HCT116 (cell line): ENCODE measurements at regions of chr19 and their contacts with region 1.

Region 1: DNA sequence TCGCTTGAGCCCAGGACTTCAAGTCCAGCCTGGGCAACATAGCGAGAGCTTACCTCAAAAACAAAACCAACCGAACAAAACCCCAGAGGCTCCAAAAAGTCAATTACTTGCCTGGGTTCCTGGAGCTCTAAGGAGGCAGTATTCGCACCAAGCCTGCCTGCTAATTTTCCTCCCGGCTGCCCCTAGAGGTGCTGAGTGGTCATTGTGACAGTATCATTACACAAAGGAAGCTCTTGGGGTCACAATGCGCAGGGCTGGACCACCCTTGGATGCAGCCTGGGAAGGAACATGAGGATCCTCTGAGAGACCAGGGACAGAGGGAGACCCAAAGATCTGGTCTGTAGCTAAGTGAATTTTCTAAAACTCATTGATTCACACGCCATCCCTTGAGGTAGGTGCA is 8.5 kb upstream of the PEX11G start:
- DNase-seq: no peak
- ATAC-seq: peak; percentile 71
- H3K4me3 ChIP-seq: no peak overlapping the region
- H3K27ac ChIP-seq: no peak overlapping the region
- H3K4me1 ChIP-seq: peaks cover 5 to 22% of the 10 kb centered on the region in 2 experiments
- H3K27me3 ChIP-seq: no peaks in the 10 kb centered on the region
- CTCF ChIP-seq: peak in 2 of 3 experiments; percentile 56 to 64; a peak in 4 of 6 replicates
- POLR2A ChIP-seq: no peak
- RAD21 ChIP-seq: no peak

Region 2: GRCh38 chr19:7394731-7395359 is 102.4 kb before region 1 on chr19:
- CTCF ChIA-PET with region 1: no interaction called
- POLR2A ChIA-PET with region 1: no interaction called
- RAD21 ChIA-PET with region 1: no interaction called
- intact Hi-C with region 1: loop called (anchors 5 kb)
- DNase-seq: peak; percentile 69
- ATAC-seq: peak; percentile 65
- H3K4me3 ChIP-seq: peak overlapping the region; percentile 75 to 84
- H3K27ac ChIP-seq: peak overlapping the region; percentile 74
- H3K4me1 ChIP-seq: peaks cover 48 to 76% of the 10 kb centered on the region in 2 experiments
- H3K27me3 ChIP-seq: no peaks in the 10 kb centered on the region
- CTCF ChIP-seq: no peak
- POLR2A ChIP-seq: no peak
- RAD21 ChIP-seq: no peak